ENCODE measurements at regions of chr20 and their contacts with region 1.

Region 1: DNA sequence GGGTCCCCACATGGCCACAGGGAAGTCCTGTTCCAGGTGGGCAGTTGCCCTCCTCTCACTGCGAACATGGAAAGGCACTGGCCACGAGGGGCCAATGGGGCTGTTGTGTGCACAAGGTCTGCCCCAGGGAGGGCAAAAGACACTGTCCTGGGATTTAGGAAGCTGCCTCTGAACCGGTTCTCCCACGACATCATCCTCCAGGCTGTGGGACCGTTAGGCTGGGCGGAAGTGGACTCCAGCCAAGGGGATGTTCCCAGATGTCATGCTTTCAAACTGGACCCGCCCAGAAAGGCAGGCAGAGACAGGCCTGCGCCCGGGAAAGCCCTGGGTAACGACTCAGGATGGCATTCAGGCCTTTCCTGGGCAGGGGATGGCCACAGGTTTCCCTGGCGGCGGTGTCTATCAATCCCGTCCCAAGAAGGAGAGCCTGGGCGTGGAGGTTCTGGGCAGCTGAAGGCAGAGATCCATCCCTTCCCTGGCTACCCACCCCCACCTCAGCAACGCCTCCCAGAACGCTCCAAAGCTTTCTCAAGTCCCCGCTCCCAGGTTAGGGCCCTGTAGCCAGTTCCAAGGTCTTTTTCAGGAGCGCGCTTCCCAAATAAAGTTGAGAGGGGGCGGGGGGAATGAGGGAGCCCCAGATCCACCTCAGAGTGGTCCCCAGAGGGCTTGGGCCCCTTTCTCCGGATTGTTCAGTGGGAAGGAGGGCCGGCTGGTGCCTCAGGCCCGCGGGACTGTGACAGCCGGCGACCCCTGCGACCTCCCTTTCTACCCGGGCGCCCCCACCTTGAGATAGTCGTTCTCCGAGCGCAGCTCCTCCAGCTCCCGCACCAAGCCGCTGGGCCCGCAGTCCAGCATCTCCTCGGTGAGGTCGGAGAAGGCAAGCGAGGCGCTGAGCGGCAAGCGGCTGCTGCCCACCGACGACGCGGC is 13.8 kb upstream of the TLDC2 start:
- DNase-seq: no peak
- H3K4me3 ChIP-seq: peak overlapping the region; percentile 71
- H3K27ac ChIP-seq: peak overlapping the region; percentile 65
- H3K27me3 ChIP-seq: no peaks in the 10 kb centered on the region
- CTCF ChIP-seq: no peak

Region 2: GRCh38 chr20:36760647-36761046 is 101.5 kb before region 1 on chr20:
- CTCF ChIA-PET with region 1: no interaction called
- POLR2A ChIA-PET with region 1: no interaction called
- DNase-seq: no peak
- H3K4me3 ChIP-seq: no peak overlapping the region
- H3K27ac ChIP-seq: no peak overlapping the region
- H3K27me3 ChIP-seq: no peaks in the 10 kb centered on the region
- CTCF ChIP-seq: no peak

Region 3: DNA sequence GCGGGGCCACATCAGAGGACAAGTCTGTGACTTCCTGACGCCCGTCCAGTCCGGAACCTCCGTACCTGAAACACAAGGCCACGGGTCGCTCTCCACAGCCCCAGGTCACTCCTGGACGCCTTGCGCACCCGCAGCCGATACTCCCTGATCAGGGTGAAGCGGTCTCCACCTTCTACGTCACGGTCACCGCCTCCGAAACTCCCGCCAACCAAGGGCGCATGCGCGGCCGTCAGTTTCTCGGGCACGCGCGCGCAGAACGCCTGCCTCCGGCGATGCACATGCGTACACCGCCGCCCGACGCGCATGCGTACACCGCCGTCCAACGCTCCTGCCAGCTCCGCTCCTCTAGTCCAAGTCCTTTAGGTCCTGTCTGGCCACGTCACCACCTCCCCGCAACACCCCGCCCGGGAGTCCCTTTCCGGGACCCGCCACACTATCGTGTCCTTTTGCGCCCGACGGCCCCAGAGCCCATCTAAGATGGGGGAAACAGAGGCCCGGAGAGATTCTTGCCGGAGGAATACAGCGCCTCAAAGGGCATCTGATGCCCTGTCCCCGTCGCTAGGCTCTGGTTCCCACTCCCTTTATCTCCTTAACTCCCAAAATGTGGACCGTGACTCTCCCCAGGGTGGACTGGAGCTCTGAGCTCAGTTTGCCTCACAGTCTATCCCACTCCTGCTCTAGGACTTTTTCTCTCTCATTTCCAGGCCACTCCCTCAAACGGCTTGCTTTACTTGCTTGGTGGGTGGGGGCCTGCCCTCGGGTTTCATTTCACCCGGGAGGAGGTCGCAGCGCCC is 88.3 kb before region 1 on chr20 and contains the start of gene DSN1:
- CTCF ChIA-PET with region 1: interaction called, 6 read pairs
- POLR2A ChIA-PET with region 1: interaction called, 13 read pairs
- DNase-seq: peak; percentile 95
- H3K4me3 ChIP-seq: peak within 1 kb of the TSS; percentile 91
- H3K27ac ChIP-seq: peak within 1 kb of the TSS; percentile 98
- H3K27me3 ChIP-seq: no peaks in the 10 kb centered on the region
- CTCF ChIP-seq: no peak; the same call in 1 of the 2 replicates
- polyA plus RNA-seq, gene DSN1: 6.0 and 8.7 TPM in 2 replicates

Region 4: GRCh38 chr20:36847009-36847709 is 15.0 kb before region 1 on chr20:
- CTCF ChIA-PET with region 1: interaction called, 4 read pairs
- POLR2A ChIA-PET with region 1: interaction called, 18 read pairs
- DNase-seq: peak; percentile 52
- H3K4me3 ChIP-seq: no peak overlapping the region
- H3K27ac ChIP-seq: peak overlapping the region; percentile 98
- H3K27me3 ChIP-seq: no peaks in the 10 kb centered on the region
- CTCF ChIP-seq: no peak

Region 5: DNA sequence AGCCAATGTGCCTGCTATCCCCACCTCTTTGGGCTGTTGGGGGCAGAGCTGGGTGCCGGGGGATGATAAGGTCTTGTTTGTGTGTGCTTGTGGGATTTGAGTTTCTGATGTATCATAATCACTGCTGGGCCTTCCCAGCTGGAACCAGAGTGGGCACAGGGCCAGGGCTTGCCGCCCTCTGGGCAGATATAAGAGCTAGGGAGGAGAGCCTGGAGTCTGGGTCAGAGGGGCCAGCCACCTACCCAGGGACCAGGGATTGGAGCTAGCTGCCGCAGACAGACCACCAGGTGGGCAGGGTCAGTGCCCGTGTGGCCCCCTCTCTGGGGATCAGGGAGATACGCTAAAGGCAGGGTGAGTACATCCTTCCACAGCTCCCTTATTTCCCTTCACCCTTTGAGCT is 10.7 kb after region 1 on chr20:
- CTCF ChIA-PET with region 1: interaction called, 10 read pairs
- POLR2A ChIA-PET with region 1: no interaction called
- DNase-seq: no peak
- H3K4me3 ChIP-seq: no peak overlapping the region
- H3K27ac ChIP-seq: no peak overlapping the region
- H3K27me3 ChIP-seq: peaks cover under 1% of the 10 kb centered on the region
- CTCF ChIP-seq: no peak

Region 6: GRCh38 chr20:37007898-37008649 is 145.9 kb after region 1 on chr20:
- CTCF ChIA-PET with region 1: no interaction called
- POLR2A ChIA-PET with region 1: no interaction called
- DNase-seq: no peak
- H3K4me3 ChIP-seq: no peak overlapping the region
- H3K27ac ChIP-seq: no peak overlapping the region
- H3K27me3 ChIP-seq: no peaks in the 10 kb centered on the region
- CTCF ChIP-seq: peak; percentile 33; the same call in 1 of the 2 replicates